Breast epithelium (tissue), 4 donors: ENCODE measurements at regions of chr14 and their contacts with region 1.

Region 1: GRCh38 chr14:94787098-94787497 is 17.2 kb upstream of the GSC start:
- DNase-seq: no peak
- H3K4me3 ChIP-seq: no peak overlapping the region
- H3K27ac ChIP-seq: no peak overlapping the region
- H3K4me1 ChIP-seq: no peaks in the 10 kb centered on the region
- H3K27me3 ChIP-seq: no peaks in the 10 kb centered on the region
- CTCF ChIP-seq: no peak
- POLR2A ChIP-seq: no peak

Region 2: GRCh38 chr14:93970549-93970946 is 816.5 kb before region 1 on chr14:
- intact Hi-C with region 1: no loop called
- DNase-seq: no peak
- H3K4me3 ChIP-seq: peak overlapping the region; percentile 27 to 67 (median 44)
- H3K27ac ChIP-seq: no peak overlapping the region
- H3K4me1 ChIP-seq: no peaks in the 10 kb centered on the region
- H3K27me3 ChIP-seq: no peaks in the 10 kb centered on the region
- CTCF ChIP-seq: peak in 1 of 3 donors; percentile 34
- POLR2A ChIP-seq: no peak

Region 3: DNA sequence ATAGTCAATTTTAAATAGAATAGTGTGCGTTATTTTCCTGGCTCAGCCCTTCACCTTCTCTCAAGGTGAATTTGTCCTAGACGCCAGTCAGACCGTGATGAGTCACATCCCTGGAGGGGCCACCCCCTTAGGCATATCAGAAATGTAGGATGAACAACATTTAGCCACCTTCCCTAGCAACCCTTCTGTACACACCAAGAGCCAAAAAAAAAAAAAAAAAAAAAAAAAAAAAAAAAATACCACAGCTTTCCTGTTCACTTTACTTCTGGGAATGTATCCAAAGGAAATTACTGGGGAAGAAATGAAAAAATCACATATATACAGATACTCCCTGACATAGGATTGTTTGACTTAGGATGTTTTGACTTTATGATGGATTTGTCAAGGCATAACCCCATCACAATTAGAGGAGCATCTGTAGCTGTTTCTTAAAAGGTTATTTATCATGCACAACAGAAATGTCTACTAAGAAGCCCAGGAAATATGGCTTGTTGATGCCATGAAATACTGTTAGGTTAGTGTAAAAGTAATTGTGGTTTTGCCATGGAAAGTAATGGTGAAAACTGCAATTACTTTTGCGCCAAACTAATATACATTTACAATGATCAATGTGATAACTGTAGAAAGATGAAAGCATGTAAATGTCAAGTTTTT is 1349.4 kb after region 1 on chr14:
- intact Hi-C with region 1: loop called (anchors 5 kb)
- DNase-seq: no peak
- H3K4me3 ChIP-seq: no peak overlapping the region
- H3K27ac ChIP-seq: peak overlapping the region in 1 of 2 donors; percentile 58
- H3K4me1 ChIP-seq: no peaks in the 10 kb centered on the region
- H3K27me3 ChIP-seq: peaks cover 0 to 4% of the 10 kb centered on the region in 2 donors
- CTCF ChIP-seq: no peak
- POLR2A ChIP-seq: no peak